Lower lobe of right lung (tissue), 2 donors: ENCODE measurements at regions of chr22 and their contacts with region 1.

Region 1: DNA sequence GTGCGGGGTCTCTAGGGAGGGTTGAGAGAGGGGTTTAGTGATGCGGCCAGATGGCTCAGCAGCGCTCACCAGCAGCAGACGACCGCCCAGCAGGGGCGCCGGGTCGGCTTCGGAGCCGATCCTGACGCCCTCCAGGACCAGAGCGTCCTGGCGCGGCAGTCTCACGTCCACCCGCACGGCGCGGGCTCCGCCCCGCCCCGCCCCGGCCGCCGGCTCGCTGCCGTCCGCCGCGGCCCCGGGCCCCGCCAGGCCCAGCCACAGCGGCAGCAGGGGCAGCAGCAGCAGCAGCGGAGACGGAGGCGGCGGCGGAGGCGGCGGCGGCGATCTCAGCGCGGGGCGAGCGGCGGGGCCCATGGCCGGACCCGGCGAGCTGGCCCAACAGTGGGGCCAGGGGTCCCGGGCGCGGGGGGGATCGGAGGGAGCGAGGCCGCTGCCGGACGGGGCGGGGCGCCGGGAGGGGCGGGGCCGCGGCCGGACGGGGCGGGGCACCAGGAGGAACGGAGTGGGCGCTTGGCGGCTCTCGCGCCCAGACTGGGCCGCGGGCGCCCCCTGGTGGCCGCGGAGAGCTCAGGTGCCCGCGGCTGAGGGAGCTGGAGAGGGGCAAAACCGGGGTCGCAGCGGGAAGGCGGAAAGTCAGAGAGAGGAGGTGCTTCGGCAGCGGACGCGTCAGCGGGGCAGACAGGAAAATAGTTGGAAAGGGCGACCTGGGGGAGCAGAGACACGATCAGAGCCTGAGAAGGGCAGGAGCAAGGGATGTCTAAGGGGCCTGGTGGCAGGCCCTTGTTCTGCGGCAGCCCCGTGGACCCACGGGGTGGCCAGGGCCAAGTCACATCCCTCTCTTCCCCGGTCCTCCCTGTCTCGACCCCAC is at the start of gene RNF215:
- DNase-seq: peak; percentile 84
- ATAC-seq: peak; percentile 95 to 96
- H3K4me3 ChIP-seq: peak within 1 kb of the TSS; percentile 61
- H3K27ac ChIP-seq: peak within 1 kb of the TSS; percentile 31
- H3K4me1 ChIP-seq: peaks cover 16% of the 10 kb centered on the region
- H3K27me3 ChIP-seq: no peaks in the 10 kb centered on the region
- CTCF ChIP-seq: peak; percentile 93
- total RNA-seq, gene RNF215: 13.6 TPM

Region 2: GRCh38 chr22:30289134-30289979 is 97.8 kb before region 1 on chr22 and contains the start of gene CASTOR1:
- intact Hi-C with region 1: loop called (anchors 10 kb)
- DNase-seq: peak; percentile 99
- ATAC-seq: peak; percentile 91
- H3K4me3 ChIP-seq: peak within 1 kb of the TSS; percentile 96
- H3K27ac ChIP-seq: peak within 1 kb of the TSS; percentile 95
- H3K4me1 ChIP-seq: peaks cover 47% of the 10 kb centered on the region
- H3K27me3 ChIP-seq: no peaks in the 10 kb centered on the region
- CTCF ChIP-seq: no peak
- total RNA-seq, gene CASTOR1: 16.2 TPM

Region 3: GRCh38 chr22:30356449-30357235 is 30.6 kb before region 1 on chr22 and contains the starts of genes CCDC157 and SF3A1:
- intact Hi-C with region 1: no loop called
- DNase-seq: peak; percentile 95
- ATAC-seq: peak; percentile 98
- H3K4me3 ChIP-seq: peak within 1 kb of the TSS; percentile 88
- H3K27ac ChIP-seq: peak within 1 kb of the TSS; percentile 98
- H3K4me1 ChIP-seq: peaks cover 46% of the 10 kb centered on the region
- H3K27me3 ChIP-seq: no peaks in the 10 kb centered on the region
- CTCF ChIP-seq: no peak
- total RNA-seq, gene CCDC157: 5.2 TPM
- total RNA-seq, gene SF3A1: 162 TPM